Mucosa of descending colon (tissue), 3 donors: ENCODE measurements at regions of chr5 and their contacts with region 1.

Region 1: GRCh38 chr5:158695595-158696330 is 404.0 kb downstream of the EBF1 start:
- DNase-seq: peak; percentile 64 to 80 (median 72)
- ATAC-seq: peak; percentile 82
- H3K4me3 ChIP-seq: no peak overlapping the region
- H3K4me1 ChIP-seq: no peaks in the 10 kb centered on the region
- CTCF ChIP-seq: peak; percentile 93

Region 2: GRCh38 chr5:159106569-159107282 is 411.0 kb after region 1 on chr5:
- intact Hi-C with region 1: loop called (anchors 5 kb)
- DNase-seq: peak; percentile 73 to 83 (median 76)
- ATAC-seq: peak; percentile 82
- H3K4me3 ChIP-seq: no peak overlapping the region
- H3K4me1 ChIP-seq: no peaks in the 10 kb centered on the region
- CTCF ChIP-seq: peak; percentile 56

Region 3: GRCh38 chr5:159133041-159133741 is 437.4 kb after region 1 on chr5:
- intact Hi-C with region 1: loop called in 1 of 2 experiments (anchors 1 kb)
- DNase-seq: peak in 1 of 3 donors; percentile 17
- ATAC-seq: peak; percentile 67
- H3K4me3 ChIP-seq: no peak overlapping the region
- H3K4me1 ChIP-seq: no peaks in the 10 kb centered on the region
- CTCF ChIP-seq: peak; percentile 64